ENCODE measurements at regions of chr21 and their contacts with region 1.

Region 1: DNA sequence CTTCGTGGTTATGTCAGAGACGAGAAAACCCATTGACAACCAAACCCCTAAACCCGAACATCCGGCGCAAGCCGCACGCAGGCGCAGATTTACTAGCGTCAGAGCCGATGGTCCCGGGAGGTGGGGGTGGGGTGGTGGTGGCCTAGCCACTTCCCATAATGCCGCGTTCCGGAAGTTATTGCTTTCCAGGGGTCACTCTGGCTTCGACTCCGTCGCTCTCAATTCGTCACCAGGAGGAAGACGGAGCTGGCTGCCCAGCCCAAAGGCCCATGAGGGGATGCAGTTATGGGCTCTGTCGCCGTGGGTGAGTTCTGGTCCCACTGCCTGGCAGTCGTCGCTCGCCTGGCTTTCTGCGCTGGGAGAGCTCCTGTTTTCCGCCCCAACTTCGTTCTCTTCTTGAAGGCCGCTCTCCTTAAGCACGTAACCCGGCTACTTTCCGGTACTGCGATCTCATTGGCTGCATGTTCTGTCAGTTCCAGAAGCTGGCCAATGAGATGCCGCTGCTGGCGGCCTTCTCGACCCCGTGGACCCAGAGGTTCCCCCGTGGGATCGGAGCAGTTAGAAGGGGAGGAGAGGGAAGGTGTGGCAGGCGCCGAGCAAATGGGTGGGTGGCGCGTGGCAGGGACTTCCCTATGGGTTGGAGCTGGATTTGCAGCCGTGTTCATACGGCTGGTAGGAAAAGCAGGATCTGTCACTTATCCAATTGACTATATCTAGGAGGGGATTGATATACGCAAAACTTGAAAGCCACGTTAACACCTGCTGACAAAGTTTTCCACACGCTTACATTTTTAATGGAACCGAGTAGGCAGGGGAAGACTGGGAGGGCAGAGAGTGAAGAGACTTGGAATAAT is at the start of gene USP16:
- DNase-seq: peak; percentile 99
- H3K4me3 Mint-ChIP-seq: peak within 1 kb of the TSS; percentile 93
- H3K27ac Mint-ChIP-seq: peak within 1 kb of the TSS; percentile 99
- H3K4me1 Mint-ChIP-seq: peaks cover 41% of the 10 kb centered on the region
- H3K27me3 Mint-ChIP-seq: no peaks in the 10 kb centered on the region
- total RNA-seq, gene USP16: 45.7 and 46.7 TPM in 2 replicates

Region 2: GRCh38 chr21:28992526-28993292 is 32.0 kb before region 1 on chr21 and contains the start of gene LTN1:
- intact Hi-C with region 1: loop called (anchors 1 kb)
- DNase-seq: peak; percentile 100
- H3K4me3 Mint-ChIP-seq: peak within 1 kb of the TSS; percentile 94
- H3K27ac Mint-ChIP-seq: peak within 1 kb of the TSS; percentile 98
- H3K4me1 Mint-ChIP-seq: peaks cover 40% of the 10 kb centered on the region
- H3K27me3 Mint-ChIP-seq: peaks cover 2% of the 10 kb centered on the region
- total RNA-seq, gene LTN1: 25.6 and 31.0 TPM in 2 replicates

Region 3: DNA sequence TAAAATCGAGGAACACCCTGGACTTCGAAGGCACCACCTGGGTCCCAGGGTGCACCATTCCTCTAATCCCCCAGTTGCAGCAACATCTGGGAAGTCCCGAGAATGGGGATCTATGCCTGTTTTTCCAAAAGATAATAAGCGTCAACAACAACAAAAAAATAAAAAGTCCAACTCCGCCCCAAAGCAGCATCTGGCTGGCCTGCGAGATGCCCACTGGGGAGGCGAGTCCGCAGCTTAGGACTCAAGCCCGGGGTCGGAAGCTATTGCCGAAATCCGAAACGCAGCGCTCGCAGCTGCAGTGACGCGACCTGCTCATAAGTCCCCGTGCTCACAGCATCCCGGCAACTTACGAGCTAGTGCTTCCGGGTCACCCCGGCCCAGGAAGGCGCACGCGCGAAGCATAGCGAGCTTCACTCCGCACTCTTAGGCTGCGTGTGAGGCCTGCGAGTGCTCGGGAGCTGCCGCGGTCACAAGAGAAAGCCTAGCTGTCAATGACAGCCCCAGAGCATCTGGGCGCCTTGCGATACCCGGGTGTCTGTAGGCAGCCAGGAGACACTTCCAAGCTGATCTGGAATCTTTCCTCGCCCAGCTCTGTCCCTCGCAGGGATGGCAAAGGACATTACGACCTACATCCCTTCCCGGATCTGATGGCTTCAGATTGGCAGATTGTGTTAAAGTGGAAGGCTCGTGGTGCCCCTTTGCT is 22.1 kb before region 1 on chr21:
- intact Hi-C with region 1: loop called (anchors 1 kb)
- DNase-seq: peak; percentile 99
- H3K4me3 Mint-ChIP-seq: peak overlapping the region; percentile 91
- H3K27ac Mint-ChIP-seq: peak overlapping the region; percentile 96
- H3K4me1 Mint-ChIP-seq: peaks cover 13% of the 10 kb centered on the region
- H3K27me3 Mint-ChIP-seq: no peaks in the 10 kb centered on the region

Region 4: GRCh38 chr21:29104239-29104708 is 79.6 kb after region 1 on chr21:
- intact Hi-C with region 1: no loop called
- DNase-seq: no peak
- H3K4me3 Mint-ChIP-seq: no peak overlapping the region
- H3K27ac Mint-ChIP-seq: no peak overlapping the region
- H3K4me1 Mint-ChIP-seq: peaks cover 7% of the 10 kb centered on the region
- H3K27me3 Mint-ChIP-seq: peaks cover 2% of the 10 kb centered on the region

Region 5: GRCh38 chr21:29318354-29318753 is 293.7 kb after region 1 on chr21:
- intact Hi-C with region 1: no loop called
- DNase-seq: no peak
- H3K4me3 Mint-ChIP-seq: no peak overlapping the region
- H3K27ac Mint-ChIP-seq: no peak overlapping the region
- H3K4me1 Mint-ChIP-seq: peaks cover 21% of the 10 kb centered on the region
- H3K27me3 Mint-ChIP-seq: no peaks in the 10 kb centered on the region

Measured in activated CD4-positive, alpha-beta T cell treated with anti-CD3 and anti-CD28 coated beads, Interleukin-2, amount 10 ng/mL, durations not matched to agents 24 days and 14 days (primary cell).